ENCODE measurements at regions of chr9 and their contacts with region 1.

Region 1: DNA sequence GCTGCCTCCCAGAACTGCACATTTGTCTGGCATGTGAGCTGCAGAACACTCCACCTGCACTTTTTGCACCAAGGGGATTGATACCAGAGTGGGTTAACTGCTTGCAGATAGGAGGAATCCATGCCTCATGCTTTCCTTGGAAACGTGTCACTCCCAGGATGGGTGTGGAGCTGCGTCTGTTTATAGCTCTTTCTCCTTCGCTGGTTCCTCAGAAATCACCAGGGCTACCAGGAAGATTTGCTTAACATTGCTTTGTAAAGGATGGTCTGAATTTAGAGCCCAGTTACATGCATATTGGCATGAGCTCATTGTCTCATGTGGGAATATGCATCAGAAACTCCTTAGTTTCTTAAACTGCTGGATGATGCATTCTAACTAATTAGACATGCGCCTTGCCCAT is 234.6 kb downstream of the GADD45G start:
- DNase-seq: no peak
- H3K4me3 ChIP-seq: no peak overlapping the region
- H3K27ac ChIP-seq: no peak overlapping the region
- H3K4me1 ChIP-seq: peaks cover 0 to 33% (median 21%) of the 10 kb centered on the region in 4 donors
- H3K27me3 ChIP-seq: no peaks in the 10 kb centered on the region
- CTCF ChIP-seq: no peak
- EP300 ChIP-seq: no peak
- POLR2A ChIP-seq: no peak

Region 2: GRCh38 chr9:89874351-89875321 is 35.2 kb after region 1 on chr9:
- intact Hi-C with region 1: loop called (anchors 5 kb)
- DNase-seq: peak; percentile 72
- H3K4me3 ChIP-seq: no peak overlapping the region
- H3K27ac ChIP-seq: peak overlapping the region; percentile 48 to 71 (median 64)
- H3K4me1 ChIP-seq: peaks cover 0 to 80% (median 51%) of the 10 kb centered on the region in 4 donors
- H3K27me3 ChIP-seq: no peaks in the 10 kb centered on the region
- CTCF ChIP-seq: no peak
- EP300 ChIP-seq: no peak
- POLR2A ChIP-seq: no peak

Measured in sigmoid colon (tissue), 7 donors.